Tibial artery (tissue), 4 donors: ENCODE measurements at regions of chr2 and their contacts with region 1.

Region 1: DNA sequence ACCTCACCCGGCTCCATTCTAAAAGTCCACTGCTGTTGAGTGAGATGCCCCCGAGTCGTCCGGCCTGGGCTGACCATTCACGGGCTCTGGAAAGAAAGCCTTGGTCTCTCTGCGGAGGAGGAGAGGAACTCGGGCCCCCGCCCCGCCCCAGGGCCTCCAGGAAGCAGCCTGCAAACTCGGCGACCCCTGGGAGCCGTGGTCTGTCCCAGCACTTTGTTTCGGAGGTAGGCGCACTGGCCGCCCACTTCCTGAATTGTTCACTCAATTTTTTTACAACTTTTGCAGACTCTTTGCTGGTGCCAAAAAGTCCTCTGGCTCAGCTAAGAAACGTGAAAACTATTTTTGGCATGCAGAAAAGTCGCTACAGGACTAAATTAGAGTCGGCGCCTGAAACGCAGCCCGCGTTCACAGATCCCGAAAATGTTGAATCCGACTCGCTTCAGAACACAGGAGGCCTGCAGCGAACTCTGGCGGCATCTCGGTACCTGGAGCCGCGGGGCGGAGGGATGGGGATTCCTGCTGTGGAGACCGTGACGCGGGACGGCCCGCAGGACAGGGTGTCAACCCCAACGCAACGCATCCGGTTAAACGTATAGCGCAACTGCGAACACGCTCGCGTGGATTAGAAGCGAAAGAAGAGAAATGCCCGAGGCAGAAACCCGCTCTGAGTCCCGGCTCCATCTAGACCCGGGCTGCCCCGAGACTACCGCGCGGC is 1.5 kb downstream of the PXDN start:
- DNase-seq: peak; percentile 90 to 95
- H3K4me3 ChIP-seq: peak overlapping the region; percentile 72 to 95
- H3K27ac ChIP-seq: peak overlapping the region; percentile 95 to 99
- H3K4me1 ChIP-seq: peaks cover 0 to 52% (median 30%) of the 10 kb centered on the region in 4 donors
- H3K27me3 ChIP-seq: no peaks in the 10 kb centered on the region
- CTCF ChIP-seq: peak; percentile 46 to 55

Region 2: GRCh38 chr2:677056-677965 is 1065.5 kb before region 1 on chr2 and contains the start of gene TMEM18:
- intact Hi-C with region 1: loop called (anchors 10 kb)
- DNase-seq: peak; percentile 95 to 97
- H3K4me3 ChIP-seq: peak within 1 kb of the TSS; percentile 79 to 84
- H3K27ac ChIP-seq: peak within 1 kb of the TSS; percentile 95 to 98
- H3K4me1 ChIP-seq: peaks cover 0 to 33% (median 14%) of the 10 kb centered on the region in 4 donors
- H3K27me3 ChIP-seq: no peaks in the 10 kb centered on the region
- CTCF ChIP-seq: peak; percentile 16 to 28

Region 3: GRCh38 chr2:1101982-1102590 is 640.8 kb before region 1 on chr2:
- intact Hi-C with region 1: no loop called
- DNase-seq: no peak
- H3K4me3 ChIP-seq: no peak overlapping the region
- H3K27ac ChIP-seq: no peak overlapping the region
- H3K4me1 ChIP-seq: no peaks in the 10 kb centered on the region
- H3K27me3 ChIP-seq: no peaks in the 10 kb centered on the region
- CTCF ChIP-seq: no peak

Region 4: DNA sequence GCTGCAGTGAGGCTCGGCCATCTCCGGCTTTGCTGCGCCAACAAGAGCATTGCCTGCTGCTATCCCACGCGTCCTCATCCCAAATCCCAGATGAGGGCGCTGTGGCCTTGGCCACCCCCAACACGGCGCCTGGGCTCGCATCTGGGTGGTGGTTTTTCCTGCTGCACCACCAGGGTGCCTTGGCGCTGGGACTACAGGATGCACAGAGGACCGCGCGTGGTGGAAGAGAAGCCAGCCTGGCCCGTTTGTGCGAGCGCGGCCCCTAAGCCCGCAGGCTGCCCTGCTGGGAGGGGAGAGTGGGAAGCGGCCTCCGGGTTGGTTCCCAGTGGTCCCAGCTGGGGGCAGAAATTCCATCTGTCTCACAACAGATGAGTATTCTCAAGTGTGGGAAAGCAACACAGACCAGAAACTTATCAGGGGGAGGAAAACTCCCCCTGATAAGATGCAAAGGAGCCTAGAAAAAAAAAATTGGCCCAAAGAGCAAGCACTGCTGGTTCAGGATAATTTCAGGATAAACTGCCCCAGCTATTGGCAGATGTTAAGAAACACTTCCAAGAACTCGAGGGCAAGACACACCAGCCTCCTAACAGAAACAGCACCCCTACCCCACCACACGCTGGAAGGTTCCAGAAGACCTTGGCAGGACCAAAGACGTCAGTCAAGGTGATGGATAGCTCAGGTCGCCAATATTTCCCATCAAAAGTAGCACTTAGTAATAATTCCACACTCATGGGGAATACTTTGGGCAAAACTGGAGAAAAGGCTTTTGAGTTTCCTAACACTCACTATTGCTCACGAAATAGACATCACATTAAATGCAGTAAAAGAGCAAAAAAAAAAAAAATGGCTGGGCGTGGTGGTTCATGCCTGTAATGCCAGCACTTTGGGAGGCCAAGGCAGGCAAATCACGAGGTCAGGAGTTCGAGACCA is 150.6 kb before region 1 on chr2:
- intact Hi-C with region 1: loop called (anchors 5 kb)
- DNase-seq: peak; percentile 82 to 94
- H3K4me3 ChIP-seq: no peak overlapping the region
- H3K27ac ChIP-seq: peak overlapping the region; percentile 18 to 47
- H3K4me1 ChIP-seq: peaks cover 0 to 13% (median 10%) of the 10 kb centered on the region in 4 donors
- H3K27me3 ChIP-seq: peaks cover 0 to 4% of the 10 kb centered on the region in 2 donors
- CTCF ChIP-seq: peak; percentile 92 to 95

Region 5: GRCh38 chr2:1653956-1654695 is 88.7 kb before region 1 on chr2:
- intact Hi-C with region 1: loop called (anchors 2 kb)
- DNase-seq: no peak
- H3K4me3 ChIP-seq: no peak overlapping the region
- H3K27ac ChIP-seq: peak overlapping the region; percentile 77 to 78
- H3K4me1 ChIP-seq: peaks cover 0 to 75% (median 56%) of the 10 kb centered on the region in 4 donors
- H3K27me3 ChIP-seq: no peaks in the 10 kb centered on the region
- CTCF ChIP-seq: no peak

Region 6: GRCh38 chr2:1817256-1818051 is 74.6 kb after region 1 on chr2:
- intact Hi-C with region 1: loop called (anchors 2 kb)
- DNase-seq: peak; percentile 93 to 97
- H3K4me3 ChIP-seq: peak overlapping the region; percentile 13 to 30
- H3K27ac ChIP-seq: peak overlapping the region; percentile 88 to 97
- H3K4me1 ChIP-seq: peaks cover 3 to 32% (median 23%) of the 10 kb centered on the region in 4 donors
- H3K27me3 ChIP-seq: no peaks in the 10 kb centered on the region
- CTCF ChIP-seq: peak; percentile 97 to 98

Region 7: GRCh38 chr2:1979138-1979537 is 236.3 kb after region 1 on chr2:
- intact Hi-C with region 1: no loop called
- DNase-seq: no peak
- H3K4me3 ChIP-seq: no peak overlapping the region
- H3K27ac ChIP-seq: no peak overlapping the region
- H3K4me1 ChIP-seq: no peaks in the 10 kb centered on the region
- H3K27me3 ChIP-seq: peaks cover 0 to 3% of the 10 kb centered on the region in 2 donors
- CTCF ChIP-seq: no peak